PC-9 (cell line): ENCODE measurements at regions of chr18 and their contacts with region 1.

Region 1: DNA sequence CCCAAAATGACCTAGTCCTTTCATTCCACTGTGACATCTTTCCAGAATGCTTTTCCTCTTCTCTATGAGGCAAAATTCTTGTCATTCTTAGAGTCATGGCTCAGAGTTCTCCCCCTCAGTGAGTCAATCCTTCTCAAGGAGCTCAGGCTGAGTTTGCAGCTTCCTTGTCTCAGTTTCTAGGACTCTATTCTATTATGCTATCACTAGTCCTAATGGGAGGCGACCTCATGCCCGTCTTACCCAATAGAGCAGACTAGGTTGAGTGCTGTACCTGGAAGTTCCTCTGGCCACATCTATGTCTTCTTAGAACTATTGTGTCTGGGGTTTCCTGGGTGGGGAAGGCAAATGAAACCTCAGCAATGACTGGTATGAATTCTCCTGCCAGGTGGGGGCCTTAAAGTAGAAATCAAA is 51.5 kb downstream of the HAUS1 start:
- DNase-seq: peak; percentile 75 to 99
- H3K4me3 ChIP-seq: no peak overlapping the region
- H3K27ac ChIP-seq: peak overlapping the region; percentile 85
- H3K4me1 ChIP-seq: peaks cover 94% of the 10 kb centered on the region
- H3K27me3 ChIP-seq: no peaks in the 10 kb centered on the region
- CTCF ChIP-seq: no peak

Region 2: DNA sequence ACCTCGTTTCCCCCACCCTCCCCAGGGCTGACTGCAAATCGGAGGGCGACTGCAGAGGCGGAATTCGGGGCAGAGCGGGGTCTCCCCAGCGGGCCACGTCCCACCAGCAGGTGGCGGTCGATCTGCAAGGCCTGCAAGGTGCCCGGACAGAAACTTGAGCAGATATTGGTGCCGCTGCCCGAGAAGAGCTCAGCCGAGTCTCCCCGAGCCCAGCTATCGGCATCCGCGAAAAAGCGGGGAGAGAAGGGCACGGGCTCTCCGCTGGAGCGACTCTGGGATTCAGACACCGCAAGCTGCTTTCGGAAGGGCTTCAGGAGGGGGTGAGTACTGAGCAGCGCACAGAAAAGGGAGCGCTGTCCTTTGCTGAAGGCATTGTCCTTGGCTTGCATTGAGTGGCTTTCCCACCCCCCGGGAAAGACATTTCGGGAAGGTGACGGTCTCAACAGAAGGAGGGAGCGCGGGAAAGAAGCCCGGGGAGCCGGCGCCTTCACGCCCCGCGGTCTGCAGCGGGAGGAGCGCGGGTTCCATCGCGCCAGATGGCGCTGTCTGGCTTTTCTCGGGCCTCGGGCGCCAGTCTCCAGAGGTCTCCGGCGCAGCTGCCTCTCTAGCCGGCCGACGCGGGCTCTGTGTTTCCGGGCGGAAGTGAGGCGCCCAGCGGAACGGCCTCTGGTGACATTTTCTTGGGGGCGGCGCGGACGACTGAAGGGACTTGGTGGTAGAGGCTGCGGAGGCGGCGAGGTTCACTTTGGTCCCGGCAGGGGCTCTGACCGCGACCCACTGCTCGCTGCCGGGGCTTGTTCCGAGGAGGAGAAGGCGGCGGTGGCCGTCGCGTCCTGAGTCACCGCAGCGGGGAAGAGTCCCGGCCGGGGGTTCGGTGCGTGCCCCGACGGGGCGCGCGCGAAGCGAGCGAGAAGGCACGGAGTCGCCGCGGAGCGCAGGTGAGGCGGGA is 18.0 kb after region 1 on chr18:
- CTCF ChIA-PET with region 1: interaction called, 15 read pairs
- POLR2A ChIA-PET with region 1: interaction called, 11 read pairs
- intact Hi-C with region 1: loop called (anchors 1 kb)
- DNase-seq: peak; percentile 82 to 83
- H3K4me3 ChIP-seq: peak overlapping the region; percentile 98
- H3K27ac ChIP-seq: peak overlapping the region; percentile 78
- H3K4me1 ChIP-seq: peaks cover 34% of the 10 kb centered on the region
- H3K27me3 ChIP-seq: no peaks in the 10 kb centered on the region
- CTCF ChIP-seq: peak; percentile 91

Region 3: GRCh38 chr18:46250084-46250811 is 94.6 kb after region 1 on chr18:
- CTCF ChIA-PET with region 1: no interaction called
- POLR2A ChIA-PET with region 1: interaction called, 28 read pairs
- intact Hi-C with region 1: loop called (anchors 1 kb)
- DNase-seq: peak; percentile 60 to 98
- H3K4me3 ChIP-seq: peak overlapping the region; percentile 27; the same call in 1 of the 2 replicates
- H3K27ac ChIP-seq: peak overlapping the region; percentile 84
- H3K4me1 ChIP-seq: peaks cover 50% of the 10 kb centered on the region
- H3K27me3 ChIP-seq: no peaks in the 10 kb centered on the region
- CTCF ChIP-seq: no peak

Region 4: DNA sequence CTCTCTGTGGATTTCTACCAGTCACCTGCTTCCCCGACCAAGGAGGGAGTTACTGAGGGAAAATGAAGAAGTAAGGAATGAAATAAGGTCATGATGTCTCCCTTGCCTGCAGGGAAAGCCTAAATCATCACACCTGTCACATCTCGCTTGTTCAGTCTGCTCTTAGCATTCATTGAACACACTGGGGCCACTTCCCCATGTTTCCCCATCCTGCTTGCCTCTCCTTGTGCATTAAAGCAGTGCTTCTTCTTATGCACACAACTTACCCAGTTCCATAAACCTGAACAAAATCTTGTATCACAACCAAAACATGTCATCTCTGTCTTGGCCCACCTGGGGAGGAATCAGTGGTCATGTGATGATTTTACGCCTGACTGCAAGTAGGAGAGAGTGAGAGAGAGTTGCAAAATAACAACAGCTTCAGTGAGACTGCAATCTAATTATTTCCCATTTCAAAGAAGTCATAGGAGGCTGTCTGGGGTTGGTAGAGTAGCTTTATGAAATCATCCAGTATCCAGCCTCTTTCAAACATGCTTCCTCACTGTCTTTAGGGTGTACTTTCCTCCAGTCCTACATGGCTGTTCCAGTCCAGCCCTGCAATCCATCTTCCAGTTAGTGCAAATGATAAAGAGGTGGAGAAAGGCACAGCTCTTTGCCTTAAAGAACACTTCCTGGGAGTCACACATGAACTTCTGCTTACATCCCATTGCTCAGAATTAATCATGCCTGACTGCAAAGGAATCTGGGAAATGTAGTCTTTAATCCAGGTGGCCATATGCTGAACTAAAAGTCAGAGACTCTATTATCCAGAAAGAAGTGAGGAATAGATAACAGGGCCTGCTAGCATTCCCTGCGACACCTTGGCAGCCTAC is 168.7 kb after region 1 on chr18:
- CTCF ChIA-PET with region 1: no interaction called
- POLR2A ChIA-PET with region 1: no interaction called
- intact Hi-C with region 1: loop called (anchors 1 kb)
- DNase-seq: peak in 1 of 2 experiments; percentile 72
- H3K4me3 ChIP-seq: peak overlapping the region; percentile 36; the same call in 1 of the 2 replicates
- H3K27ac ChIP-seq: peak overlapping the region; percentile 100
- H3K4me1 ChIP-seq: peaks cover 58% of the 10 kb centered on the region
- H3K27me3 ChIP-seq: no peaks in the 10 kb centered on the region
- CTCF ChIP-seq: no peak

Region 5: GRCh38 chr18:46829947-46830346 is 674.3 kb after region 1 on chr18:
- CTCF ChIA-PET with region 1: no interaction called
- POLR2A ChIA-PET with region 1: interaction called, 10 read pairs
- intact Hi-C with region 1: no loop called
- DNase-seq: no peak
- H3K4me3 ChIP-seq: no peak overlapping the region
- H3K27ac ChIP-seq: no peak overlapping the region
- H3K4me1 ChIP-seq: no peaks in the 10 kb centered on the region
- H3K27me3 ChIP-seq: no peaks in the 10 kb centered on the region
- CTCF ChIP-seq: no peak